Activated B cell treated with CpG ODN at 0.5 μM for 24 hours (primary cell): ENCODE measurements at regions of chr6 and their contacts with region 1.

Region 1: DNA sequence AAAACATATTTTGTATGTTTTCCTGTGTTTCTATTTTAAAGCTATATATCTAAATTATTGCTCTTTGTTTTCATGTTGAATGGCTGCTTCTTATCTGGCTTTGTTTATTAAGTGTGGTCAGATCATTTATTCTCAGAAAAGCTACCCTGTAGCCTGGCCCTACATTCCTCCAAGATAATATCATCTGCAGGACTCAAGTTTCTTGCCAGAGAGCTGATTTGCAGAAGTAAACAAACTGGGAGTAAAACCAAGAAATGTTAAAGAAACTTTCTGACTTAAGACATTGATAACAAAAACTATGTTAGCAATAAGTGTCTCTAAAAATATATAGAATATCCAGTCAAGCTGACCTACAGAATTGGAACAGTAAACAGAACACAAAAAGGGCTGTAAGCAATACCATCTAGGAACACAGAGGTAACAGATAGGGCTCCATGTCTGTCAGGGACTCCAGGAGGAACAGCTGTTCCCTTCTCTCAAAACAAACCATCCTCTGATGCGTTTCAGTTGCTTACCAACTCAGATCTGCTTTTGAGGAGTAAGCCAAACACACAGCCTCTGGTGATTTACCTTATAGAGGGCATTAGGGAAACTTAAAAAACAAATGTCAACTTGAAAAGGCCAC is 17.5 kb upstream of the CEP85L start:
- DNase-seq: no peak
- ATAC-seq: no peak
- H3K4me3 Mint-ChIP-seq: no peak overlapping the region
- H3K27ac Mint-ChIP-seq: no peak overlapping the region
- H3K4me1 Mint-ChIP-seq: peaks cover 56% of the 10 kb centered on the region
- H3K27me3 Mint-ChIP-seq: no peaks in the 10 kb centered on the region
- CTCF ChIP-seq: no peak

Region 2: GRCh38 chr6:118683881-118684872 is 15.3 kb after region 1 on chr6:
- CTCF ChIA-PET with region 1: no interaction called
- POLR2A ChIA-PET with region 1: interaction called, 4 read pairs
- intact Hi-C with region 1: loop called (anchors 2 kb)
- DNase-seq: no peak
- ATAC-seq: no peak
- H3K4me3 Mint-ChIP-seq: peak overlapping the region; percentile 2
- H3K27ac Mint-ChIP-seq: peak overlapping the region; percentile 35
- H3K4me1 Mint-ChIP-seq: peaks cover 43% of the 10 kb centered on the region
- H3K27me3 Mint-ChIP-seq: no peaks in the 10 kb centered on the region
- CTCF ChIP-seq: no peak